Activated CD4-positive, alpha-beta memory T cell treated with anti-CD3 and anti-CD28 coated beads, Interleukin-2, amount 10 ng/mL, durations not matched to agents 7 days and 5 days (primary cell): ENCODE measurements at regions of chr3 and their contacts with region 1.

Region 1: DNA sequence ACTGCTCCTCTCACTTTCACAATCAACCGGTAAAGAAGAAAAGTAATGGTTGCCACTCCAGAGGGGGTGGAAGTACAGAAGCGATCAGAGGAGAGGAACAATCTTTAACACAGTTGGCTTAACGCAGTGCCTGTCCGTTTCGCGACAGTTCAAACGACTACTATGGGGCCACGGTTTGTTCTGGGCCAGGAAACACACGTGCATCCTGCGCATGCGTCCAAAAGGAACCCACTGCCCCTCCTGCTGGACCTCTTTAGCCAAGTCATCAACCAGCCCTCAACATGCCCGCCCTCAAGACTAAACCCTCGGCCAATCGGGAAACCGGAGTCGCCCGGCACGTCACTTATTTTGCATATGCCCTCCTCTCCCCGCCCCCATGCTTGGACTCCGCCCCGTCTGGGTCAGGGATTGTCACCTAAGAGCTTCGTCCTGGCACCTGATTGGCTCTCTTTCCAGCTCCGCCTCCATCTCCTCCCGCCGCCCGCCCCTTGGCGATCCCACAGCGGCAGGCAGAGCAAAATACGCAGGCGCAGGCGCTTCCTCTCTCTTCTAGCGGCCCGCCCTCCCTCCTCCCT is 345 bp upstream of the CDV3 start:
- DNase-seq: peak; percentile 100
- H3K4me3 Mint-ChIP-seq: peak overlapping the region; percentile 71
- H3K27ac Mint-ChIP-seq: peak overlapping the region; percentile 98
- H3K4me1 Mint-ChIP-seq: peaks cover 49% of the 10 kb centered on the region
- H3K27me3 Mint-ChIP-seq: peaks cover 1% of the 10 kb centered on the region

Region 2: DNA sequence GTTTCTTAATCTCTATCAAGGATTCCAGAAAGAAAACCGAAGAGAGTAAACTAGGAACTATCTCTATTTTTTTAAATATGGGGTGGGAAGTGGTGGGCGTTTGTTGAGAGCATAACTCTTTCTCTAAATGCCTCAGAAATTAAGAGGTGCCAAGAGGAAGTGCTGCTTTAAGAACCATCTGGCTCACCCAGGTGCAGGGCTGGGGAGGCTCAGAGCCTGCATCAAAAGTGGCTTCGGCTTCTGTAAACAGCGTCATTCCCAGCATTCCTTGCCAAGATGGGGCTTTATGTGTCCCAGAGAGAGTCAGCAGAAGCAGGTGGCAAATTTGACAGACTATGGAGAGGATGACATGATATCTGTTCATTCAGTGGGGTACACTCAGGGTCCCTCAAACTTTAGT is 296.5 kb before region 1 on chr3:
- CTCF ChIA-PET with region 1: no interaction called
- POLR2A ChIA-PET with region 1: no interaction called
- DNase-seq: no peak
- H3K4me3 Mint-ChIP-seq: no peak overlapping the region
- H3K27ac Mint-ChIP-seq: no peak overlapping the region
- H3K4me1 Mint-ChIP-seq: no peaks in the 10 kb centered on the region
- H3K27me3 Mint-ChIP-seq: peaks cover 11% of the 10 kb centered on the region

Region 3: DNA sequence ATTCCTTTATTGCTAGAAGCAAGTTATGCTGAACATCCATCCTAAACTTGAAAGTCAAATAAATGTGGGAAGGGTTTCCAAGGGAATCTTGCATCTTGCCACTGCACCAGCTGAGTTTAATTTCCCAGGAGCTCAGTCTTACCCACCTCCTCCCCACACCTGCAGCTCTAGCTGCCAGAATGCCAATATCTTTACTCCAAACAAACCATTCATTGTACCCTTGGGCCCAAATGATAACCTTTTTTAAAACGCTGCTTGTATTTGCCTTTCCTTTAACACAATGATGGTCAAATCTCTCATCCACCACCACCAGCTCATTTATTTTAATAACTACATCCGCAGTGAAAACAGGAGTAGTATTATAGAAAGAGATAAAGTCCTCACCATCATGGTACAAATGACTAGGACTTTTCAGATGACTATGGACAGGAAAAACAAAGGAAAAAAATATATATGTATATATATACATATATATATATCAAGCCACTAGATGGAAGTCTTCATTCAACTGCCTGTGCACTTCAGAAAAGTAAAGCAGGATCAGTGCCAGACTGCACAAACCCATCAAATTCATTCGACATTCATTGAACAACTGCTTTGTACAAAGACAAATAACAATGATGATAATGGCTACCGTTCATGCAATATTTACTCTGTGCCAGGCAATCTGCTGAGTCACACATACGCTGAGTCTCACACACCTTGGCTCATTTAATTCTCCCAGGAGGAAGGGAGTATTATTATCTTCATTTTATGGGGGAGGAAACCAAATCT is 129.3 kb before region 1 on chr3:
- CTCF ChIA-PET with region 1: interaction called, 5 read pairs
- POLR2A ChIA-PET with region 1: interaction called, 44 read pairs
- DNase-seq: no peak
- H3K4me3 Mint-ChIP-seq: no peak overlapping the region
- H3K27ac Mint-ChIP-seq: no peak overlapping the region
- H3K4me1 Mint-ChIP-seq: peaks cover 47% of the 10 kb centered on the region
- H3K27me3 Mint-ChIP-seq: no peaks in the 10 kb centered on the region

Region 4: GRCh38 chr3:133466531-133467386 is 106.4 kb before region 1 on chr3:
- CTCF ChIA-PET with region 1: no interaction called
- POLR2A ChIA-PET with region 1: no interaction called
- DNase-seq: no peak
- H3K4me3 Mint-ChIP-seq: no peak overlapping the region
- H3K27ac Mint-ChIP-seq: no peak overlapping the region
- H3K4me1 Mint-ChIP-seq: peaks cover 16% of the 10 kb centered on the region
- H3K27me3 Mint-ChIP-seq: no peaks in the 10 kb centered on the region

Region 5: GRCh38 chr3:133487920-133488540 is 85.1 kb before region 1 on chr3:
- CTCF ChIA-PET with region 1: interaction called, 23 read pairs
- POLR2A ChIA-PET with region 1: interaction called, 110 read pairs
- DNase-seq: peak; percentile 45
- H3K4me3 Mint-ChIP-seq: no peak overlapping the region
- H3K27ac Mint-ChIP-seq: no peak overlapping the region
- H3K4me1 Mint-ChIP-seq: peaks cover 42% of the 10 kb centered on the region
- H3K27me3 Mint-ChIP-seq: no peaks in the 10 kb centered on the region

Region 6: DNA sequence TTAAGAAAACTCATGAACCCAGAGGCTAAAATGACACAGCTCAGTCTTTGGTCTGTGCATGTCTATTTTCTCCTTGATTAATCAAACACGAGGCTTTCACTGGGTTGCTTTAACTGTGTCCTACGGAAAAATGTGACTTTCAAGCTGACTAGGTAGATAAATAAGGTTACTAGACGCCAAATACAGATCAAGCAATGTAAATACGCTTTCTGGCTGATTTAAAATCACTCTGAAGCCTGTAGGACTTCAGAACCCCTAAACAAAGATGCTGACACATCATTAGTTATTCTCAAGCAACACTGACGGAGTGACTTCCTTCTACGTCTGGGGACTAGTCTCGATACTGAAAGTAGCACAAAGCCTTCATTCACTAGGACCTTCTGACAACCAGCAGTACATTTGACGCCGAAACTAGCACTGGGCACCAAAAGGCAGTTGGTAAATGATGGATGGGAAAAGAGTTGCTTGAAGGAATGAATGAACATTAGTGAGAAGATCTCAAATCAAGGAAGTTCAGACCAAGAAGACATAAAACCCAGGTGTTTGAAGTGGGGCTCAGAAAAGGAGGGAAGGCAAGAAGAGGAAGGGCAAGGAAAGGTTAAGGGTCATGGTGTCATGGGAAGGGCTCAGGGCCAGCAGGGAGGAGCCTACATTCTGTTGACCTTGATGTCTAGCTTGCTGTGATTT is 66.8 kb before region 1 on chr3:
- CTCF ChIA-PET with region 1: interaction called, 6 read pairs
- POLR2A ChIA-PET with region 1: interaction called, 24 read pairs
- DNase-seq: peak; percentile 39
- H3K4me3 Mint-ChIP-seq: peak overlapping the region; percentile 58
- H3K27ac Mint-ChIP-seq: peak overlapping the region; percentile 85
- H3K4me1 Mint-ChIP-seq: peaks cover 15% of the 10 kb centered on the region
- H3K27me3 Mint-ChIP-seq: no peaks in the 10 kb centered on the region

Region 7: GRCh38 chr3:133540896-133541674 is 32.1 kb before region 1 on chr3:
- CTCF ChIA-PET with region 1: no interaction called
- POLR2A ChIA-PET with region 1: no interaction called
- DNase-seq: no peak
- H3K4me3 Mint-ChIP-seq: no peak overlapping the region
- H3K27ac Mint-ChIP-seq: no peak overlapping the region
- H3K4me1 Mint-ChIP-seq: no peaks in the 10 kb centered on the region
- H3K27me3 Mint-ChIP-seq: no peaks in the 10 kb centered on the region

Region 8: DNA sequence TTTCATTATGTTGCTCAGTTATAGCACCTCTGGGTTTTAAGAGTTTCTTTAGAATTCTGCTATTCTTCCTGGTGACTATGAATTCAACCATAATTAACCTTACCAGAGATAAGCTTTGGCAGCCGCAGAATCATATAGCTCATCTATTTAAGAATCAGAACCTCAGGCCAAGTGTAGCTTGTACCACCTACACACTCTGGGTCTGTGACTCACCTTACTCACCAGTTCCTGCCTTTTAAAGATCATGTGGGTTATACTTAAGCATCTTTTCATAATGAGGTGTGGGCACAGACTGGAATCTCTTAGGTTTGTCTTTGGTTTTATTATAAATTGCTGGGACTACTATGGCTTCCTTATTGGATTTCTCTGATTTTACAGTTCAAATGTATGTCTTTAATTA is 22.2 kb after region 1 on chr3:
- CTCF ChIA-PET with region 1: interaction called, 4 read pairs
- POLR2A ChIA-PET with region 1: interaction called, 12 read pairs
- DNase-seq: no peak
- H3K4me3 Mint-ChIP-seq: no peak overlapping the region
- H3K27ac Mint-ChIP-seq: no peak overlapping the region
- H3K4me1 Mint-ChIP-seq: peaks cover 14% of the 10 kb centered on the region
- H3K27me3 Mint-ChIP-seq: no peaks in the 10 kb centered on the region

Region 9: GRCh38 chr3:133661454-133662277 is 88.5 kb after region 1 on chr3 and contains the start of gene TOPBP1:
- CTCF ChIA-PET with region 1: interaction called, 6 read pairs
- POLR2A ChIA-PET with region 1: interaction called, 58 read pairs
- DNase-seq: peak; percentile 91
- H3K4me3 Mint-ChIP-seq: peak within 1 kb of the TSS; percentile 98
- H3K27ac Mint-ChIP-seq: peak within 1 kb of the TSS; percentile 96
- H3K4me1 Mint-ChIP-seq: peaks cover 47% of the 10 kb centered on the region
- H3K27me3 Mint-ChIP-seq: no peaks in the 10 kb centered on the region
- total RNA-seq, gene TOPBP1: 76.9 to 82.4 TPM

Region 10: GRCh38 chr3:134485718-134486576 is 912.8 kb after region 1 on chr3 and contains the starts of genes ANAPC13 and CEP63:
- CTCF ChIA-PET with region 1: no interaction called
- POLR2A ChIA-PET with region 1: interaction called, 11 read pairs
- DNase-seq: peak; percentile 94
- H3K4me3 Mint-ChIP-seq: peak within 1 kb of the TSS; percentile 89
- H3K27ac Mint-ChIP-seq: peak within 1 kb of the TSS; percentile 95
- H3K4me1 Mint-ChIP-seq: peaks cover 45% of the 10 kb centered on the region
- H3K27me3 Mint-ChIP-seq: no peaks in the 10 kb centered on the region
- total RNA-seq, gene ANAPC13: 27.3 to 27.4 TPM
- total RNA-seq, gene CEP63: 22.4 to 24.2 TPM